Activated CD4-positive, alpha-beta T cell treated with anti-CD3 and anti-CD28 coated beads, Interleukin-2, amount 10 ng/mL, durations not matched to agents 24 days and 14 days (primary cell): ENCODE measurements at regions of chr1 and their contacts with region 1.

Region 1: DNA sequence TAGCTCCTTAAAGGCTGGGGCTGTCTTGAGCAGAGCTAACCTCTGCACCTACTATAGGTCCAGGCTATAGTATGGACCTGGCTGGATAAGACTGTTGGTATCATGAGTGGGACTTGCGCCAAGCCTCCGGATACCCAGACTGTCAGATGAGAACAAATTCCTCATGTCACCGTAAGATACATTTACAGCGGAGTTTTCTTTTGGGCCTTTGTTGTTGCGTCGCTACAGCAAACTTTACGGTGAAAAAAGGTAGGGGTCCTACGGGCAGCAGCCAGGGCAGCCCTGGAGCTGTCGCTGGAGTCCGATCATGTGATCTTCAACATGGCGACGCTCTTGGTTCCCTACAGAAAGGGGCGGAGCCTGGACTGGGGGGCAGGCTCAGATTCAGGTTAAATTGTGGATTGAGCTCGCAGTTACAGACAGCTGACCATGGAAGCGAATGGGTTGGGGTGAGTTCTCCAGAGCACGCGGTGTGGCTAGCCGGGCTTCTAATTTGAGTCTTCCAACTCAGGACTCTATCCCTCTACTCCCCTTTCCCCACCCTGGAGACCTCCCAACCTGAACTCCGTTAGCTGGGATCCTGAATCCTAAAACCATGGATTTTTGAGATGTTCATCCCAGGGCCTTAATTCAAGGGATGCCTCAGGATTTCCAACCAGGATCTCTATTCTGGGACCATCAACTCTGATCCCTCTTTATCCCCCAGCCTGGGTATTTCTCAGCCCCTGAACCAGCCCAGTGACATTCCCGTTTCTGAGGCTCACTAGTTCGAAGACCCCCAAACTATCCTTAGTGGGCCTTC is at the start of gene UROD:
- DNase-seq: peak; percentile 97
- H3K4me3 Mint-ChIP-seq: peak within 1 kb of the TSS; percentile 85
- H3K27ac Mint-ChIP-seq: peak within 1 kb of the TSS; percentile 91
- H3K4me1 Mint-ChIP-seq: peaks cover 52% of the 10 kb centered on the region
- H3K27me3 Mint-ChIP-seq: no peaks in the 10 kb centered on the region
- total RNA-seq, gene UROD: 96.0 and 97.7 TPM in 2 replicates

Region 2: DNA sequence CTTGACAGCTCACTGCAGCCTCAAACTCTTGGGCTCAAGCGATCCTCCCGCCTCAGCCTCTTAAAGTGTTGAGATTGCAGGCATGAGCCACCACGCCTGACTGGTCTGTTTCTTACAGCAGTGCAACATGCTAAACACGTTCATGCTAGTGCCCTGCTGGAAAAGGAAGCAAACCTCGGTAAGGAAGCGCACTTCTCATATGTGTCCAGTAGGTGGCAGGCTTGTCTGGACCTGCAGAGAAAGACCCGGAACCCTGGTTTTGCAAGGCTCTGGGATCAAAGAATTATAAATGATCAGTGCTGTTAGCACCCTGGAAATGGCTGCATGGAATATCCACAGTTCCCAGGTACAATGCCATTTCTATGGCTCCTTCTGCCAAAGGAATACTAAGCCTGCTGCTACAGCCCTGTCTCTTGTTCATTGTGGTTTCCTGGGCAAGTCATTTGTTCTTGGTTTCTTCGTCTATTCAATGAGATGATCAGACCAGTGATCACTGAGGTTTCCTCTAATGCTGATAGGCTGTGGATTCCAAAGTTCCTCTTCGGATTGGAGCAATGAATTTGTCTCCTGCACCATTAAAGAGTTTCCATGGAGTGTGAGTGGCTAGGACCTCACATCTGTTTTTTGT is 297.0 kb before region 1 on chr1:
- intact Hi-C with region 1: loop called (anchors 5 kb)
- DNase-seq: peak; percentile 92
- H3K4me3 Mint-ChIP-seq: peak overlapping the region; percentile 59
- H3K27ac Mint-ChIP-seq: peak overlapping the region; percentile 52
- H3K4me1 Mint-ChIP-seq: peaks cover 38% of the 10 kb centered on the region
- H3K27me3 Mint-ChIP-seq: peaks cover 11% of the 10 kb centered on the region

Region 3: GRCh38 chr1:44786138-44786840 is 225.7 kb before region 1 on chr1:
- intact Hi-C with region 1: loop called (anchors 5 kb)
- DNase-seq: peak; percentile 93
- H3K4me3 Mint-ChIP-seq: peak overlapping the region; percentile 83
- H3K27ac Mint-ChIP-seq: peak overlapping the region; percentile 85
- H3K4me1 Mint-ChIP-seq: peaks cover 28% of the 10 kb centered on the region
- H3K27me3 Mint-ChIP-seq: no peaks in the 10 kb centered on the region

Region 4: GRCh38 chr1:44985747-44986359 is 26.2 kb before region 1 on chr1:
- intact Hi-C with region 1: loop called (anchors 1 kb)
- DNase-seq: no peak
- H3K4me3 Mint-ChIP-seq: peak overlapping the region; percentile 96
- H3K27ac Mint-ChIP-seq: peak overlapping the region; percentile 89
- H3K4me1 Mint-ChIP-seq: peaks cover 17% of the 10 kb centered on the region
- H3K27me3 Mint-ChIP-seq: no peaks in the 10 kb centered on the region

Region 5: DNA sequence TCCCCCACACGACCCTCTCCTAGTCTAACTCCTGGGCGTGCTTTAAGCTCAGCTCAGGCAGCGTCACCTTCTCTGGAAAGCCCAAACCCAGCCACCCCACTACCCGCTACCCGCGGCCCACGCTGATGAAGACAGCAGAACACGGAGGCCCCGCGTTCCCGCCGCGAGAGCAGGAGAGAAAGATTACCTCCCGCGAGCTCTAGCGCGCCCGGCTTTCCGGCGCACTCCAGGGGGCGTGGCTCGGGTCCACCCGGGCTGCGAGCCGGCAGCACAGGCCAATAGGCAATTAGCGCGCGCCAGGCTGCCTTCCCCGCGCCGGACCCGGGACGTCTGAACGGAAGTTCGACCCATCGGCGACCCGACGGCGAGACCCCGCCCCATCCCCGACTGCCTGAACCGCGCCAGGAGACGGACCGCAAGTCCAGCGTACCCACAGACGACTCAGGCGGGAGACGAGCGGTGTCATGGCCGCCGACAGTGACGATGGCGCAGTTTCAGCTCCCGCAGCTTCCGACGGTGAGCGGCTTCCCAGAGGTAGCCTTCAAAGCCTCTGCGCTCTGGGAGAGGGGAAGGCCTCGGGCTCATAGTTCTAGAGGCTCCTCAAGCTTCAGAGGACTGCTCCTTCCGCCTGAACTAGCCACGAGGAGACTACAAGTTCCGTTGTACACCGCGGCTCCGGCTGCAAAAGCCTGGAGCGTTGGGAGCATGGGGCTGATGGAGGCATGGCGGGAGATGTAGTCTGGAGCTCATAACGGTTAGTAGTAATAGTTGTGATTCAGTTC is 327.9 kb after region 1 on chr1 and contains the starts of genes MUTYH and TOE1:
- intact Hi-C with region 1: loop called (anchors 1 kb)
- DNase-seq: peak; percentile 98
- H3K4me3 Mint-ChIP-seq: peak within 1 kb of the TSS; percentile 98
- H3K27ac Mint-ChIP-seq: peak within 1 kb of the TSS; percentile 99
- H3K4me1 Mint-ChIP-seq: peaks cover 45% of the 10 kb centered on the region
- H3K27me3 Mint-ChIP-seq: no peaks in the 10 kb centered on the region
- total RNA-seq, gene MUTYH: 55.6 and 57.0 TPM in 2 replicates
- total RNA-seq, gene TOE1: 38.2 and 44.8 TPM in 2 replicates